ENCODE measurements at regions of chr4 and their contacts with region 1.

Region 1: GRCh38 chr4:121696581-121697461 is at the start of gene ANXA5:
- DNase-seq: peak; percentile 64 to 97 (median 78)

Region 2: GRCh38 chr4:121726642-121727268 is 29.9 kb after region 1 on chr4:
- intact Hi-C with region 1: loop called (anchors 2 kb)
- DNase-seq: no peak